Activated naive CD4-positive, alpha-beta T cell treated with anti-CD3 and anti-CD28 coated beads for 36 hours (primary cell): ENCODE measurements at regions of chr5 and their contacts with region 1.

Region 1: GRCh38 chr5:43120720-43121564 is at the start of gene ZNF131:
- DNase-seq: peak; percentile 96
- H3K4me3 Mint-ChIP-seq: peak within 1 kb of the TSS; percentile 99
- H3K27ac Mint-ChIP-seq: peak within 1 kb of the TSS; percentile 96
- H3K4me1 Mint-ChIP-seq: peaks cover 38% of the 10 kb centered on the region
- H3K27me3 Mint-ChIP-seq: no peaks in the 10 kb centered on the region
- total RNA-seq, gene ZNF131: 25.0 to 29.6 TPM

Region 2: DNA sequence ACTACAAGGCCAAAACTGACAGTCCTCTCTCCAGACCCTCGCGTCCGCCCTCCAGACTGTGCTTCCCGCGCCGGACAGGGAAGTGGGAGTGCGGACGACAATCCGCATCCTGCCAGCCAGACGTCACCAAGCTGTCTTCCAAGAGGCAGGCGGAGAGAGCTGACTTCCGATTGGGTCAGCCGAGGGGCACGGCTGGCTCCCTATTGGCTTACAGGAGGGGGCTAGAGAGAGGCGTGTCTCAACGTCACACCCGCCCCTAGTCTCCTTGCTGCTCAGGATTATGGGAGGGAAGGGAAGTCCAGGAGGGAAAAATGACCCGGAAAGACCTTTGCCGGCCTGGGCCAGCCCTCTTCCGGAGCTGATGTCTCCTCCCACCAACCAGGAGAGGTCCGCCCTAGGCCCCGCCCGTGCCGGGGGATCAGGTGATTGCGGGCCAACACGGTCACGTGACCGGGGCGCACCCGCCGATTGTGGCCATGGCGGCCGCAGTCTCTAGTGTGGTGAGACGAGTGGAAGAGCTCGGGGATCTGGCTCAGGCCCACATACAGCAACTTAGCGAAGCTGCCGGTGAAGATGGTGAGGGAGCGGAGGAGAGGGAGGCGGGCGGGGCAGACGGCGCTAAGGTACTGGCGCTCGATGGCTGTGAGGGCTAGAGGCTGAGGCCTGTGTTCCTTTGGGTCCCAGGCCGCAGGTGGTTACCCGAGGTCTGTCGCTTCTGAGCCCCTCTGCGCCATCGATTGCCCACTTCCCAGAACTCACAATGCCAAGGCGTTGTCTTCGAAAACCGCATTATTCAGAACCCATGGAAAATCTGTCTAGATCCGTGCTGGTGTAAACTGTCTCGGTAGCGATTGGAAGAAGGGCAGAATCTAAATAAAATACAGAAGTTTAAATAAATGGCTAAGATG is 1216.8 kb before region 1 on chr5 and contains the start of gene RIMOC1:
- CTCF ChIA-PET with region 1: no interaction called
- intact Hi-C with region 1: loop called (anchors 5 kb)
- DNase-seq: peak; percentile 98
- H3K4me3 Mint-ChIP-seq: peak within 1 kb of the TSS; percentile 79
- H3K27ac Mint-ChIP-seq: peak within 1 kb of the TSS; percentile 88
- H3K4me1 Mint-ChIP-seq: peaks cover 38% of the 10 kb centered on the region
- H3K27me3 Mint-ChIP-seq: no peaks in the 10 kb centered on the region
- total RNA-seq, gene RIMOC1: 16.6 to 19.6 TPM

Region 3: DNA sequence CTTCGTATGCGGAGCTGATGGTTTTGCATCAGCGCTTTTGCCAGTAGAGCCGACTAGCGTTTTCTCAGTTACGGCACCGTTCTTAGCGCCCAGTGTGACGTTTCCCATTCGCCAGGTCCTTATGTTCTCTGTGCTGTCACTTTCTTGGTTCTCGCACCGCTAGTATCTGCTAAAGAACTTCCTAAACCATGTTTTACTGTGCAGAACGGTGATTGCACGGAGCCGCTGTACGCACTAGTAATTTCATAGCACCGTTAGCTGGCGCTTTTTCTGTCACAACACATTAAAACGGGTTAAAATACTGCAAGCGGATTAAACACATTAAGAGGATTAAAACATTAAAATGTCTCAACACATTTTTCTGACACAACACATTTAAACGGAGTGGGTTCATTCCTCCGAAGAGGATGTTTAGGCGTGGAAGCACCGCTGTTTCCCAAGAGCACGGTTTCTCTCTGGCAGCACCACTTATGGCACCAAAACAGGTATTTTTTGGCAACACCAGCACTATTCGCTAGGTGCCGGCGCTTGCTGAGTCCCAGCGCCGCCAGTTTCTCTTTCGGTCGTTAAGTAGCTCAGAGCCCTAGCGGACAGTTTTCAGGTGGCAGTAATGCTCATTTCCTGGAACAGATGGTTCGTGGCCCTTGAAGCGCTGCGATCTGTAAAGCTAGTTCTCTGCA is 101.2 kb before region 1 on chr5:
- CTCF ChIA-PET with region 1: interaction called, 5 read pairs
- intact Hi-C with region 1: loop called (anchors 1 kb)
- DNase-seq: peak; percentile 90
- H3K4me3 Mint-ChIP-seq: peak overlapping the region; percentile 97
- H3K27ac Mint-ChIP-seq: peak overlapping the region; percentile 99
- H3K4me1 Mint-ChIP-seq: peaks cover 37% of the 10 kb centered on the region
- H3K27me3 Mint-ChIP-seq: no peaks in the 10 kb centered on the region

Region 4: GRCh38 chr5:43049236-43049635 is 71.7 kb before region 1 on chr5:
- CTCF ChIA-PET with region 1: no interaction called
- intact Hi-C with region 1: no loop called
- DNase-seq: no peak
- H3K4me3 Mint-ChIP-seq: no peak overlapping the region
- H3K27ac Mint-ChIP-seq: no peak overlapping the region
- H3K4me1 Mint-ChIP-seq: peaks cover 28% of the 10 kb centered on the region
- H3K27me3 Mint-ChIP-seq: no peaks in the 10 kb centered on the region

Region 5: GRCh38 chr5:43105369-43106289 is 15.3 kb before region 1 on chr5:
- CTCF ChIA-PET with region 1: interaction called, 108 read pairs
- intact Hi-C with region 1: loop called (anchors 1 kb)
- DNase-seq: peak; percentile 92
- H3K4me3 Mint-ChIP-seq: peak overlapping the region; percentile 81
- H3K27ac Mint-ChIP-seq: peak overlapping the region; percentile 87
- H3K4me1 Mint-ChIP-seq: peaks cover 42% of the 10 kb centered on the region
- H3K27me3 Mint-ChIP-seq: no peaks in the 10 kb centered on the region

Region 6: GRCh38 chr5:43305948-43306565 is 185.1 kb after region 1 on chr5:
- CTCF ChIA-PET with region 1: interaction called, 3 read pairs
- intact Hi-C with region 1: loop called (anchors 1 kb)
- DNase-seq: no peak
- H3K4me3 Mint-ChIP-seq: no peak overlapping the region
- H3K27ac Mint-ChIP-seq: peak overlapping the region; percentile 75
- H3K4me1 Mint-ChIP-seq: peaks cover 80% of the 10 kb centered on the region
- H3K27me3 Mint-ChIP-seq: no peaks in the 10 kb centered on the region

Region 7: GRCh38 chr5:43556857-43557542 is 436.1 kb after region 1 on chr5 and contains the start of gene PAIP1:
- CTCF ChIA-PET with region 1: no interaction called
- intact Hi-C with region 1: loop called (anchors 2 kb)
- DNase-seq: peak; percentile 82
- H3K4me3 Mint-ChIP-seq: peak within 1 kb of the TSS; percentile 84
- H3K27ac Mint-ChIP-seq: peak within 1 kb of the TSS; percentile 95
- H3K4me1 Mint-ChIP-seq: peaks cover 17% of the 10 kb centered on the region
- H3K27me3 Mint-ChIP-seq: peaks cover 3% of the 10 kb centered on the region
- total RNA-seq, gene PAIP1: 41.7 to 42.9 TPM